ENCODE measurements at regions of chr11 and their contacts with region 1.

Region 1: DNA sequence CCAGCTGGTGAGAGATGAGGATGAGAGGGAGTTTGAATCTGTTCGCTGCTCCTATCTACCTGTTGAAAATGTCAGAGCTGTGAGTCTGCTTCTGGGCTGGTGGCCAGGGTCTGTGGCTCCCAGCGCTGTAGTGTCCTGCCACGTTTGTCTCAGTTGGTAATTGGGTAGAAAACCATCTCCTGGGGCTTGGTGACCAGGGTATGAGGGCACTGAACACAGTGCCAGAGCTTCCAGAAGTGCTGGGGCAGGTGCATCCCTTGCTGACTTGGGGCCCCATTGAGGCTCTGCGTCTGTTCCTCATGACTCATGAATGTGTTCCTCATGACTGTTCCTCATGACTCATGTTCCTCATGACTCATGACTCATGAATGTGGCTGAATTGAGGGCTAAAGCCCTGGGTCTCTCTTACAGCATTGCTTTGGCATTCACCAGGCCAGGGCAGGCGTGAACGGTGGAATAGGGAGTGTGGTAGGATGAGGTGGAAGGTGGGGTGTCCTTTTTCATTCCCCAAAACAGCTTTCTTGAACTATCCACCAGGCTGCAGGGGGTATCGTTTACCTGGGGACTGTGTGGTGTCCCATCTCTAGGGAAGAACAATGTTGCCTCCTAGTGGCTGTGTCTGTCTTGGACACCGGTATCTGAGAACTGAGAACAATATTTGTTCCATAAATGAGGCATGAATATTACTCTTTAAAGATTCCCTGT is 139.5 kb downstream of the COMMD9 start:
- DNase-seq: peak; percentile 54 to 65
- ATAC-seq: peak; percentile 96 to 99
- H3K4me3 ChIP-seq: no peak overlapping the region
- H3K27ac ChIP-seq: peak overlapping the region in 3 of 4 donors; percentile 53 to 68 (median 55)
- H3K4me1 ChIP-seq: peaks cover 5% of the 10 kb centered on the region in 2 donors
- H3K27me3 ChIP-seq: no peaks in the 10 kb centered on the region
- CTCF ChIP-seq: peak in 4 of 5 experiments; percentile 18 to 45 (median 38)
- POLR2A ChIP-seq: peak in 1 of 2 donors; percentile 22

Region 2: DNA sequence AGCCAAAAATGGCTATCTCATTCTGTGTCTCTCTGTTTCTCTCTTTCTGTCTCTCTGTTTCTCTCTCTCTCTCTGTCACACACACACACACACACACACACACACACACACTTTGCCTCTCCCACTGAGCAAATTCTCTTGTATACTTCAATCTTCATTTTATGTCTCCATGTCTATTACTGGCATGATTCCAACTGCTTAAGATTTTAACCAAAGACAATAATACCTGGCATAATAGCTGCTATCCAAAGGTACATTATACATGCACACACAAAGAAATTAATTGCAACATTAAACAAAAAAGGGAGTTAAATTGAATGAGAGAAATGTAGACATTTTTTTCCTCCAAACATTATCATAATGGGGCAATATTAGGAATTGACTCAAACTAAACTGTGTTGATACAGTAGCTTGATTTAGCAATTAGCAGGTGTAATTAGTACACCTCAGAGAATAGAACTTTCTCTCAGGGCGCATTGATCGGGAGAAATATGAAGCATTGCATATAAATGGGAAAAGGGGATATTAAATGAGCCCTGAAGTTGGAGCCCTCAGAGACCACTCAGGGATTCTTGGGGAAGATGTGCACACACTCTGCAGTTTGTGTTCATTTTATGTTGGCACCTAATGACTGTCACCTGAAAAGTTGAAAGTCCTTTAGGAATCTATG is 713.0 kb before region 1 on chr11:
- in situ Hi-C with region 1: no loop called
- intact Hi-C with region 1: no loop called
- DNase-seq: no peak
- ATAC-seq: no peak
- H3K4me3 ChIP-seq: no peak overlapping the region
- H3K27ac ChIP-seq: no peak overlapping the region
- H3K4me1 ChIP-seq: no peaks in the 10 kb centered on the region
- H3K27me3 ChIP-seq: peaks cover 0 to 3% (median 0%) of the 10 kb centered on the region in 3 donors
- CTCF ChIP-seq: no peak
- POLR2A ChIP-seq: no peak

Region 3: DNA sequence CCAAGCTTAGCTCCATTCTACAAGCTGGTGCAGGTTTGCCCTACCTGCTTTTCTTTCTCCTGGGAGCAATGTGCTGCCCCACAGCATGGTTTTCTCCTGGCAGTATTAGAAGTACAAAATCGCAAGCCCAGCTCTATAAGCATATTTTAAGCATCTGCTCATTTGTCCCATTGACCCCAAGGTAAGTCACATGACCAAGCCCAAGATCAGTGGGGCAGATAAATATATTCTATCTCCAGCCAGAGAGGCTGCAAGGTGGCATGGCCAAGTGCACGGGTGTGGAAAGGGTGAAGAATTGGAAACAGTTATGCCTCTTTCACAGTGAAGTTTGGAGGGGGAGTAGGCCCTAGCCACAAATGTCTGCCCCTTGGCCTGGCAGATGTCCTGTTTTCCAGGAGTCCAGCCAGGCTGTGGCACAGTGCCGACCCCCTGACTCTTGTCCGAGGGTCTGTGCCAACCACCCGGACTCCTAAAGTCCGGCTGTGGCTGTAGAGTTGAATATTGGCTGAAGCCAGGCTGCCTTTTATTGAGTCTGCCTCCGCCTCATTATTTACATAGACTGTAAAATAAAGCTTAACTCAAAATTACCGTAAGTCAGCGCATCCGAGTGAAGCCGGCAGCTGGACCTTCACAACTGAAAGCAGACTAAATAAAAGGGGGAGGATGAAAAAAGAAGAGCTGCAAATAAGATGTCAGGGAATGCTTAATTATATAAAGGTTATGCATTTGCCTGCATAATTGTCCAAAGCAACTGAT is 26.2 kb before region 1 on chr11:
- in situ Hi-C with region 1: no loop called
- intact Hi-C with region 1: no loop called
- DNase-seq: no peak
- ATAC-seq: no peak
- H3K4me3 ChIP-seq: no peak overlapping the region
- H3K27ac ChIP-seq: peak overlapping the region in 1 of 4 donors; percentile 23
- H3K4me1 ChIP-seq: peaks cover 5 to 7% of the 10 kb centered on the region in 2 donors
- H3K27me3 ChIP-seq: no peaks in the 10 kb centered on the region
- CTCF ChIP-seq: no peak
- POLR2A ChIP-seq: no peak

Region 4: GRCh38 chr11:36186340-36187175 is 36.9 kb after region 1 on chr11:
- in situ Hi-C with region 1: no loop called
- intact Hi-C with region 1: loop called (anchors 1 kb)
- DNase-seq: peak; percentile 58 to 71
- ATAC-seq: peak; percentile 96
- H3K4me3 ChIP-seq: no peak overlapping the region
- H3K27ac ChIP-seq: peak overlapping the region; percentile 68 to 84 (median 76)
- H3K4me1 ChIP-seq: peaks cover 23 to 24% of the 10 kb centered on the region in 2 donors
- H3K27me3 ChIP-seq: no peaks in the 10 kb centered on the region
- CTCF ChIP-seq: no peak
- POLR2A ChIP-seq: no peak